Esophagus muscularis mucosa (tissue), 4 donors: ENCODE measurements at regions of chr19 and their contacts with region 1.

Region 1: DNA sequence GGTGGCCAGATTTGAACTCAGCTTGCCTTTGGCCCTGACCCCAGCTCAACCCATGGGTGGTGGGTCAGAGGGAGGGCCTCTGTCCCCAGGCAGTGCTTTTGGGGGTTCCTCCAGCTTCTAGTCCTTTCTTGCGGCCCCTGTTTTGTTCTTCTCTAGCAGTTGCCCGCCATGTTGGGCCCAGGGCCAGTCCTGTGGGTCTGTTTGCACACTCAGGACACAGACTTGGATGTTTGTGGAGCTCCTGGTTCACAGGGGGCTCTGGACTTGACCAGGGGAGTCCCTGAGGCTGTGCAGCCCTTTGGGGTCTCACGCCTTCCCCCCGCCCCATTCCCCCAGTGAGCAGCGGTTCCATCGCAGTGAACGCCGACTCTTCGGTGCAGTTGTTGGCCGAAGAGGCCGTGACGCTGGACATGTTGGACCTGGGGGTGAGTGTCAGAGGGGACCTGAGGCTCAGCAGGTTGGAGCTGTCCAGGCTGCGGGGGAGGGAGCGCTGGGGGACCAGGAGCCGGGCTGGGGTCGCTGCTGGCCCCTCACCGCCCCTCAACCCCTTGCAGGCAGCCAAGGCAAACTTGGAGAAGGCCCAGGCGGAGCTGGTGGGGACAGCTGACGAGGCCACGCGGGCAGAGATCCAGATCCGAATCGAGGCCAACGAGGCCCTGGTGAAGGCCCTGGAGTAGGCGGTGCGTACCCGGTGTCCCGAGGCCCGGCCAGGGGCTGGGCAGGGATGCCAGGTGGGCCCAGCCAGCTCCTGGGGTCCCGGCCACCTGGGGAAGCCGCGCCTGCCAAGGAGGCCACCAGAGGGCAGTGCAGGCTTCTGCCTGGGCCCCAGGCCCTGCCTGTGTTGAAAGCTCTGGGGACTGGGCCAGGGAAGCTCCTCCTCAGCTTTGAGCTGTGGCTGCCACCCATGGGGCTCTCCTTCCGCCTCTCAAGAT is 2.5 kb downstream of the ATP5F1D start:
- DNase-seq: no peak
- H3K4me3 ChIP-seq: peak overlapping the region; percentile 22 to 44 (median 31)
- H3K27ac ChIP-seq: peak overlapping the region; percentile 91 to 100 (median 100)
- H3K4me1 ChIP-seq: peaks cover 74 to 89% (median 82%) of the 10 kb centered on the region in 4 donors
- H3K27me3 ChIP-seq: no peaks in the 10 kb centered on the region
- CTCF ChIP-seq: peak in 2 of 3 experiments; percentile 98 to 99
- EP300 ChIP-seq: no peak
- POLR2A ChIP-seq: peak; percentile 15

Region 2: GRCh38 chr19:1266916-1267476 is 23.0 kb after region 1 on chr19:
- intact Hi-C with region 1: loop called (anchors 1 kb)
- DNase-seq: no peak
- H3K4me3 ChIP-seq: peak overlapping the region; percentile 55 to 65 (median 60)
- H3K27ac ChIP-seq: peak overlapping the region; percentile 99 to 100 (median 100)
- H3K4me1 ChIP-seq: peaks cover 72 to 85% (median 77%) of the 10 kb centered on the region in 4 donors
- H3K27me3 ChIP-seq: no peaks in the 10 kb centered on the region
- CTCF ChIP-seq: peak; percentile 98 to 100 (median 99)
- EP300 ChIP-seq: no peak
- POLR2A ChIP-seq: no peak

Region 3: GRCh38 chr19:1470203-1471009 is 226.4 kb after region 1 on chr19:
- intact Hi-C with region 1: no loop called
- DNase-seq: no peak
- H3K4me3 ChIP-seq: peak overlapping the region; percentile 46 to 59 (median 49)
- H3K27ac ChIP-seq: no peak overlapping the region
- H3K4me1 ChIP-seq: peaks cover 58 to 91% (median 85%) of the 10 kb centered on the region in 4 donors
- H3K27me3 ChIP-seq: peaks cover 32 to 100% (median 71%) of the 10 kb centered on the region in 4 donors
- CTCF ChIP-seq: no peak
- EP300 ChIP-seq: no peak
- POLR2A ChIP-seq: no peak